CD4-positive, alpha-beta T cell (primary cell): ENCODE measurements at regions of chr12 and their contacts with region 1.

Region 1: GRCh38 chr12:92363295-92364146 is 217.9 kb upstream of the BTG1 start:
- DNase-seq: peak; percentile 20 to 79 (median 51)
- ATAC-seq: peak; percentile 55
- H3K4me3 ChIP-seq: peak overlapping the region; percentile 43
- H3K4me3 Mint-ChIP-seq: peak overlapping the region; percentile 74
- H3K27ac ChIP-seq: peak overlapping the region; percentile 73 to 79
- H3K27ac Mint-ChIP-seq: peak overlapping the region; percentile 90
- H3K4me1 ChIP-seq: peaks cover 29% of the 10 kb centered on the region
- H3K4me1 Mint-ChIP-seq: peaks cover 76% of the 10 kb centered on the region
- H3K27me3 ChIP-seq: no peaks in the 10 kb centered on the region
- H3K27me3 Mint-ChIP-seq: no peaks in the 10 kb centered on the region
- CTCF ChIP-seq: no peak

Region 2: GRCh38 chr12:92208613-92209121 is 154.9 kb before region 1 on chr12:
- CTCF ChIA-PET with region 1: no interaction called
- POLR2A ChIA-PET with region 1: interaction called, 10 read pairs
- intact Hi-C with region 1: no loop called
- DNase-seq: peak in 8 of 14 experiments; percentile 0 to 77 (median 31)
- ATAC-seq: peak; percentile 86
- H3K4me3 ChIP-seq: peak overlapping the region; percentile 43
- H3K4me3 Mint-ChIP-seq: peak overlapping the region; percentile 49
- H3K27ac ChIP-seq: peak overlapping the region; percentile 13 to 50
- H3K27ac Mint-ChIP-seq: peak overlapping the region; percentile 85
- H3K4me1 ChIP-seq: peaks cover 30% of the 10 kb centered on the region
- H3K4me1 Mint-ChIP-seq: peaks cover 41% of the 10 kb centered on the region
- H3K27me3 ChIP-seq: no peaks in the 10 kb centered on the region
- H3K27me3 Mint-ChIP-seq: no peaks in the 10 kb centered on the region
- CTCF ChIP-seq: no peak

Region 3: DNA sequence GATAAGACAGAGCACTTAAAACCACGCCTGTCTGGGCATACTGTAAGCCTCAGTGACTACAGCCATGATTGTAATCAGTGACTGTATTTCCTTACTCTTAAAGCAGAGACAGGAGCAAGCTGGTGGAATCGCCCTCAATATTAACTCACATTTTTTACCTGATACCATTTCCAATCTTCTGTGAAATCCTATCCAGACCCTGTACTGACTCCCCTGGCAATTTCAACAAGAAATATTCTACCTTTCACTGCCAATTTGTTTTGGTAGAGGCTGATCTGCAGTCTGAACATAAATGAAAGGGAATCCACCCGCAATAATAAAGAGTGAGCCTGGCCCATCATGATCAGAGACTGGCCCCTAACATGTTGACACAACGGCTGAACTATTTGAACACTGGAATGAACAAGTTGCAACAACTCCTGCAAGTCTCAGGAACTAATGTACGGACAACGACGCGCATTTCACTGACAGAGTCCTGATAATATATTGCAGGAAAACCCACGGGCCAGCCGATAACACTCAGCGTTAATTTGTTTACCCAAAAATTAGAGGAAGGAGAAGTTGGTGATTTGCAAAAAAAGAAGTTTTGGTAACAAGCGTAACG is 22.4 kb before region 1 on chr12:
- CTCF ChIA-PET with region 1: no interaction called
- POLR2A ChIA-PET with region 1: no interaction called
- intact Hi-C with region 1: loop called in 1 of 2 experiments (anchors 2 kb)
- DNase-seq: peak in 4 of 14 experiments; percentile 13 to 33 (median 27)
- ATAC-seq: peak; percentile 98
- H3K4me3 ChIP-seq: no peak overlapping the region
- H3K4me3 Mint-ChIP-seq: peak overlapping the region; percentile 67
- H3K27ac ChIP-seq: no peak overlapping the region
- H3K27ac Mint-ChIP-seq: peak overlapping the region; percentile 79
- H3K4me1 ChIP-seq: no peaks in the 10 kb centered on the region
- H3K4me1 Mint-ChIP-seq: peaks cover 34% of the 10 kb centered on the region
- H3K27me3 ChIP-seq: no peaks in the 10 kb centered on the region
- H3K27me3 Mint-ChIP-seq: no peaks in the 10 kb centered on the region
- CTCF ChIP-seq: no peak

Region 4: GRCh38 chr12:92396647-92397252 is 33.2 kb after region 1 on chr12:
- CTCF ChIA-PET with region 1: no interaction called
- POLR2A ChIA-PET with region 1: interaction called, 47 read pairs
- intact Hi-C with region 1: loop called (anchors 1 to 5 kb)
- DNase-seq: peak in 1 of 14 experiments; percentile 29
- ATAC-seq: no peak
- H3K4me3 ChIP-seq: no peak overlapping the region
- H3K4me3 Mint-ChIP-seq: peak overlapping the region; percentile 52
- H3K27ac ChIP-seq: peak overlapping the region; percentile 72 to 80
- H3K27ac Mint-ChIP-seq: peak overlapping the region; percentile 95
- H3K4me1 ChIP-seq: peaks cover 81% of the 10 kb centered on the region
- H3K4me1 Mint-ChIP-seq: peaks cover 99% of the 10 kb centered on the region
- H3K27me3 ChIP-seq: no peaks in the 10 kb centered on the region
- H3K27me3 Mint-ChIP-seq: no peaks in the 10 kb centered on the region
- CTCF ChIP-seq: no peak

Region 5: GRCh38 chr12:92593734-92594402 is 230.3 kb after region 1 on chr12:
- CTCF ChIA-PET with region 1: no interaction called
- POLR2A ChIA-PET with region 1: interaction called, 4 read pairs
- intact Hi-C with region 1: loop called in 1 of 2 experiments (anchors 2 kb)
- DNase-seq: peak; percentile 59 to 98 (median 72)
- ATAC-seq: peak; percentile 84
- H3K4me3 ChIP-seq: no peak overlapping the region
- H3K4me3 Mint-ChIP-seq: peak overlapping the region; percentile 28
- H3K27ac ChIP-seq: peak overlapping the region; percentile 96 to 97
- H3K27ac Mint-ChIP-seq: peak overlapping the region; percentile 91
- H3K4me1 ChIP-seq: peaks cover 31% of the 10 kb centered on the region
- H3K4me1 Mint-ChIP-seq: peaks cover 43% of the 10 kb centered on the region
- H3K27me3 ChIP-seq: no peaks in the 10 kb centered on the region
- H3K27me3 Mint-ChIP-seq: no peaks in the 10 kb centered on the region
- CTCF ChIP-seq: no peak